ENCODE measurements at regions of chr1 and their contacts with region 1.

Region 1: GRCh38 chr1:46527474-46528296 is 23.8 kb downstream of the KNCN start:
- DNase-seq: peak; percentile 84
- H3K4me3 Mint-ChIP-seq: no peak overlapping the region
- H3K27ac Mint-ChIP-seq: no peak overlapping the region
- H3K4me1 Mint-ChIP-seq: peaks cover 16% of the 10 kb centered on the region
- H3K27me3 Mint-ChIP-seq: peaks cover 82% of the 10 kb centered on the region

Region 2: DNA sequence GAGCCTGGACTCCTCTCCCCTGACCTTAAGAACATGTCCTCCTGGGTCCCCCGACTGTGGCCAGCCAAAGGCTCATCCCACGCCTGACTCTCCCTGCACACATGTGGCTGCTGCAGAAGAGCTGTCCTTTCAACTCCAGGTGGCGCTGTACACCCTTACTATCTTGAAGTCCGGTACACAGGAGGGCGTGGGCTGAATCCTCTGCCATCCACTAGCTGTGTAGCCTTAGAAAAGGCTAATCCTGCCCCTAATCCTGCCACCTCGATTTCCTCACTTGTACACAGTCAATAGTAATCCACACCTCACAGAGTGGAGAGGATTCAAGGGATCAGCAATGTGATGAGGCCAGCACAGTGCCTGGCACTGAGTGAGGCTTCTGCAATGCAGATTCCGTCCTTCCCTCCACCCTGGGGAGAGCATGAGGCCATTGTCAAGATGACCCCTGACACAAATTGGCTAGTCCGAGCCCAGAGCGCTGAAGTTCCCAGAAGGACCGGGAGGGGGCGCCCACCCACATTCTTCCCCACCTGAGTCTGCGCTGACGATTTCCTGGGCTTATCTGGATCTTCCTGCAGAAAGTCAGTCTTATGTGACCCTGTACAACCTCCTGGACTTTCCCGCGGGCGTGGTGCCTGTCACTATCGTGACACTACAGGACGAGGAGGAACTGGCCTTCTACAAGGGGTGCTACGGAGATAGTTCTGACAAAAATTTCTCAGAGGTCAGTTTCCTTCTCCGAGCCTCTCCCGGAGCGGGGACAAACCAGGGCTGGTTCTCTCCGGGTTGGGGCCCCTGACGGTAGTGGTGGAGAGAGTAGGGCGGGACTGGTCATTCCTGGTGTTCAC is 85.1 kb before region 1 on chr1:
- CTCF ChIA-PET with region 1: interaction called, 160 read pairs
- DNase-seq: peak; percentile 76
- H3K4me3 Mint-ChIP-seq: peak overlapping the region; percentile 76
- H3K27ac Mint-ChIP-seq: no peak overlapping the region
- H3K4me1 Mint-ChIP-seq: peaks cover 9% of the 10 kb centered on the region
- H3K27me3 Mint-ChIP-seq: peaks cover 76% of the 10 kb centered on the region

Region 3: DNA sequence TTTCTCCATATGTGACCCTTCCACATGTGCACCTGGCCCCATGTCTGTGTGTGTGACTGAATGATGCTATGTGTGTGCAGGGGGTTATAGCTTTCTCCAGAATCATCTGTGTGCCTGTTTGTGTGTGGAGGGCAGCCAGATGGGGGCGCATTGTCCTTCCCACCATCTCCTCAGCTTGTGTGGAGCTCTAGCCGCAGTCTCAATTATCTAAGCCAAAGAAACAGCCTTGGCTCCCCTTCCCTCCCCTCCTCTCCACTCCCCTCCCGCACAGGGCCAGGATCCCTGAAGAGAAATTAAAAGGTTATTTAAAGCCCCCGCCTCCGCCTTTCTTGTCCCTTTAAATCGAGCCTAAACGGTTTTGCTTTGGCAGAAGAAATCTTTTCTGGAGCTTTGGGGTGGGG is 39.9 kb before region 1 on chr1:
- CTCF ChIA-PET with region 1: interaction called, 40 read pairs
- DNase-seq: peak; percentile 39
- H3K4me3 Mint-ChIP-seq: no peak overlapping the region
- H3K27ac Mint-ChIP-seq: no peak overlapping the region
- H3K4me1 Mint-ChIP-seq: peaks cover 15% of the 10 kb centered on the region
- H3K27me3 Mint-ChIP-seq: peaks cover 100% of the 10 kb centered on the region

Region 4: DNA sequence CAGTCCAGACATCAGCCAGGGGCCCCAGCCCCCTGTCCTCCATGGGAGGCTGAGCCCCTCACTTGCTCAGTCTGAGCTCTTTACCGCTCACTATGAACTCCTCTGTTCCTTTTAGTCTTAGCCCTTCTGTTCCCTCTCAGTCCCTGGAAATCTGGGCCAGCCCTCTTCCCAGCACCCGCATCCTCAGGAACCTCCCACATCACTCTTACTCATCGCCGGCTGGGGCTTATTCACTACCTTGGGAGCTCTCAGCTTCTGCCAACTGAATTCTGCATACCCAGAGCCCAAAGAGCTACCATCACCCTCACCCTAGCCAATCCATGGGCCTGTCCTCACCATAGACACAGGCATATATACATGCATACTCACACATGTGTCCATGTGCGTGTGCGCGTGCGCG is 12.3 kb after region 1 on chr1:
- CTCF ChIA-PET with region 1: interaction called, 10 read pairs
- DNase-seq: no peak
- H3K4me3 Mint-ChIP-seq: no peak overlapping the region
- H3K27ac Mint-ChIP-seq: no peak overlapping the region
- H3K4me1 Mint-ChIP-seq: peaks cover 2% of the 10 kb centered on the region
- H3K27me3 Mint-ChIP-seq: peaks cover 87% of the 10 kb centered on the region

Region 5: GRCh38 chr1:46630719-46631118 is 103.0 kb after region 1 on chr1:
- CTCF ChIA-PET with region 1: no interaction called
- DNase-seq: no peak
- H3K4me3 Mint-ChIP-seq: no peak overlapping the region
- H3K27ac Mint-ChIP-seq: no peak overlapping the region
- H3K4me1 Mint-ChIP-seq: no peaks in the 10 kb centered on the region
- H3K27me3 Mint-ChIP-seq: no peaks in the 10 kb centered on the region

Region 6: GRCh38 chr1:46724991-46725735 is 197.5 kb after region 1 on chr1:
- CTCF ChIA-PET with region 1: interaction called, 57 read pairs
- DNase-seq: peak; percentile 81
- H3K4me3 Mint-ChIP-seq: no peak overlapping the region
- H3K27ac Mint-ChIP-seq: no peak overlapping the region
- H3K4me1 Mint-ChIP-seq: peaks cover 3% of the 10 kb centered on the region
- H3K27me3 Mint-ChIP-seq: peaks cover 33% of the 10 kb centered on the region

Region 7: DNA sequence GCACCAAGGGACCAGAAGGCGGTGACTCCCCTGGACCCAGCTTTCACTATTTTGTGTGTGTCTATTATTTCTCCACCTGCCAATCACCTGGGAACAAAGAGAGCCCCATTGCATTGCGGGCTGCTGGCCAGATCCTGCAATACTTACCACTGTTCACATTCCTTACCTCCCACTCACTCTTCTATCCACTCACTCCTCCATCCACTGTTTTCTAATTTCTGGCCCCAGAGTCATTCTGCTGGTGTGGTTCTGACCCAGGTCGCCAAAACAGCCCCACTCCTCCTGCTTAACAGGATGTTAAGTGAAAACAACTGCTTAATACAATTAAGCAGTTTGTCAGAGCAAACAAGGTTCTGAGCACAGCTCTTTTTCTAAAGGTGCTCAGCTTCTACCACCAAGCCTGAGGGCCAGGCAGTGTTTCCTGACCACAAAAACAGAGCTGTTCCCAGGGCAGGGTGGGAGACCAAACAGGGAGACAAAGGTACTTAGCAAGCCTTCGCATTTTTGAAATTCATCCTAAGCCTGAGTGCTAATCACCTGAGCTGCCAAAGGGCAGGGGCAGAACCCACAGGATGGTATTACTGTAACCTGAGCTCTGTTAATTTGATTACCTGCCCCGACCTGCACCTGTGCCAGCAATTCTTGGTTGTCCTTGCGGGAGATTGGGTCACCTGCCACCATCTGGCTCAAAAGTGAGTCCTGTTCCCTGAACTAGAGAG is 229.7 kb after region 1 on chr1:
- CTCF ChIA-PET with region 1: no interaction called
- DNase-seq: no peak
- H3K4me3 Mint-ChIP-seq: no peak overlapping the region
- H3K27ac Mint-ChIP-seq: no peak overlapping the region
- H3K4me1 Mint-ChIP-seq: no peaks in the 10 kb centered on the region
- H3K27me3 Mint-ChIP-seq: peaks cover 47% of the 10 kb centered on the region

Measured in activated naive CD4-positive, alpha-beta T cell treated with anti-CD3 and anti-CD28 coated beads, Interleukin-2, amount 10 ng/mL, durations not matched to agents 7 days and 5 days (primary cell).